HCT116 (cell line): ENCODE measurements at regions of chr1 and their contacts with region 1.

Region 1: DNA sequence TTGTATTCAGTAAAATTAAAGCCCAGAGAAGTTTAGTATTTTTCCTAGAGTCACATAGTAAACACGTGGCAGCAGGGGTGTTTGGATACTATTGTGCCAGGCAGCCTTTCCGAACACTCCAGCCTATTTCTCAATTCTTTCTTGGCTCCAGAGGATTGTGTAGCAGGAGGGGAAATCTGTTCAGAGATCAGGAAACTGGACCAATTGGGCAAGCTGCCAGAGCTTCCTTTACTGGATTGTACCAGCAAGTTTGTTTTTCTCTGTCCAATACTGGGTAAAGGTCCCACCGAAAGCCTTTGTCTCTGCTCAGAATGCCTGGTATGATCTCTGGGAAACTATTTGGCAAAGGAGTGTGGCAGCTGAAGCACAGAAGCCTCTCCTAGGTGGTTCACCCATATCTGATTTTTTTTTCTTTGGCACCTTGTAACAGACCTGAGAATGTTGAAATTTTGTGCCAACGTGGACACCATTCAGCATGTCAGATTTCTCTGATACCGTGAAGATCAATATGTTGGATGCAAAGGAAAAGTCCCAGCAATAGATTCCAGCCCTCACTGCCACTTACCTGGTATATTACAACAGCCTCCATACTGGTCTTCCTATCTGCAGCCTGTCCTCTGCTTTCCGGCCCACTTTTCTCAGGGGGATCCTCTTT is 126.2 kb downstream of the FGGY start:
- DNase-seq: no peak
- ATAC-seq: no peak
- H3K4me3 ChIP-seq: no peak overlapping the region
- H3K27ac ChIP-seq: no peak overlapping the region
- H3K4me1 ChIP-seq: peaks cover 11 to 22% of the 10 kb centered on the region in 2 experiments
- H3K27me3 ChIP-seq: no peaks in the 10 kb centered on the region
- CTCF ChIP-seq: no peak
- POLR2A ChIP-seq: no peak
- RAD21 ChIP-seq: no peak

Region 2: GRCh38 chr1:59506952-59507351 is 83.9 kb after region 1 on chr1:
- CTCF ChIA-PET with region 1: no interaction called
- POLR2A ChIA-PET with region 1: no interaction called
- RAD21 ChIA-PET with region 1: no interaction called
- intact Hi-C with region 1: no loop called
- DNase-seq: no peak
- ATAC-seq: no peak
- H3K4me3 ChIP-seq: no peak overlapping the region
- H3K27ac ChIP-seq: no peak overlapping the region
- H3K4me1 ChIP-seq: peaks cover 9 to 16% of the 10 kb centered on the region in 2 experiments; a peak in 3 of 4 replicates
- H3K27me3 ChIP-seq: no peaks in the 10 kb centered on the region
- CTCF ChIP-seq: no peak
- POLR2A ChIP-seq: no peak
- RAD21 ChIP-seq: no peak

Region 3: GRCh38 chr1:59678493-59679228 is 255.6 kb after region 1 on chr1:
- CTCF ChIA-PET with region 1: no interaction called
- POLR2A ChIA-PET with region 1: no interaction called
- RAD21 ChIA-PET with region 1: no interaction called
- intact Hi-C with region 1: loop called (anchors 10 kb)
- DNase-seq: peak; percentile 28
- ATAC-seq: peak; percentile 85
- H3K4me3 ChIP-seq: no peak overlapping the region
- H3K27ac ChIP-seq: no peak overlapping the region
- H3K4me1 ChIP-seq: peaks cover 0 to 19% of the 10 kb centered on the region in 2 experiments; a peak in 3 of 4 replicates
- H3K27me3 ChIP-seq: no peaks in the 10 kb centered on the region
- CTCF ChIP-seq: no peak
- POLR2A ChIP-seq: no peak
- RAD21 ChIP-seq: no peak